Activated CD4-positive, alpha-beta memory T cell treated with anti-CD3 and anti-CD28 coated beads, Interleukin-2, amount 10 ng/mL, durations not matched to agents 7 days and 5 days (primary cell): ENCODE measurements at regions of chr11 and their contacts with region 1.

Region 1: GRCh38 chr11:33742249-33742851 is 6.1 kb upstream of the CD59 start:
- DNase-seq: no peak
- H3K4me3 Mint-ChIP-seq: no peak overlapping the region
- H3K27ac Mint-ChIP-seq: no peak overlapping the region
- H3K4me1 Mint-ChIP-seq: no peaks in the 10 kb centered on the region
- H3K27me3 Mint-ChIP-seq: no peaks in the 10 kb centered on the region

Region 2: GRCh38 chr11:33362051-33362910 is 380.1 kb before region 1 on chr11:
- CTCF ChIA-PET with region 1: interaction called, 25 read pairs
- POLR2A ChIA-PET with region 1: no interaction called
- DNase-seq: no peak
- H3K4me3 Mint-ChIP-seq: no peak overlapping the region
- H3K27ac Mint-ChIP-seq: no peak overlapping the region
- H3K4me1 Mint-ChIP-seq: peaks cover 2% of the 10 kb centered on the region
- H3K27me3 Mint-ChIP-seq: peaks cover 16% of the 10 kb centered on the region

Region 3: DNA sequence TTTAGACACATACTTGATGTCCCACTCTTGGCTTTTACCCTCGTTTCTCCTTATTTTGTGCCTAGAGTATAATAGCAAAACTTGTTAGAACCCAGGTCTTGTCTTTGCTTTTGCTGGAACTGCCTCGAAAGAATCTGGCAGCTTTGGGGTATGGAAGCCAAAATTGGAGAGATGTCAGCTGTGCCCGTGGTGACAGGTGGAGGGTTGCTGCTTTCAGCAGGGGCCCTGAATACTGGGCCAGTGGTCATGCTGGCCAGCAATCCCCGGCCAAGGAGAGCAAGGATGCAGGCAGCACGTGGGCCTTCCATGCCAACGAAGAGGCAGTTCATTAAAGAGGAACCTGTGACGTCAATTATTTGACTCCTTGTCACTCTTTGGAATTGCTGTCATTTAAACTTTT is 304.0 kb before region 1 on chr11:
- CTCF ChIA-PET with region 1: no interaction called
- POLR2A ChIA-PET with region 1: no interaction called
- DNase-seq: no peak
- H3K4me3 Mint-ChIP-seq: no peak overlapping the region
- H3K27ac Mint-ChIP-seq: no peak overlapping the region
- H3K4me1 Mint-ChIP-seq: no peaks in the 10 kb centered on the region
- H3K27me3 Mint-ChIP-seq: peaks cover 5% of the 10 kb centered on the region

Region 4: DNA sequence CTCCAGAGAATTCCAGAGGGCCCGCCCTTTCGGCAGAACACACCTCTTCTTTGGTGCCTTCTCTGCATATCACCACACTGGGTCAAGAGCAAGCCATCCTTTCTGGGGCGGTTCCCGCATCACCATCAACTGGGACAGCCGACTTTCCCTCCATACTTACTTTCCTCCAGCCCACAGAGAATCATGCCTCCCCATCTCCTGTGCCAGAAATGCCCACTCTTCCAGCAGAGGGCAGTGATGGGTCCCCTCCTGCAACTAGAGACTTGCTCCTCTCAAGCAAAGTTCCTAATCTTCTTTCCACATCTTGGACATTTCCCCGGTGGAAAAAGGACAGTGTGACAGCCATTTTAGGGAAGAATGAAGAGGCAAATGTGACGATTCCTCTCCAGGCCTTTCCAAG is 199.4 kb before region 1 on chr11:
- CTCF ChIA-PET with region 1: interaction called, 14 read pairs
- POLR2A ChIA-PET with region 1: no interaction called
- DNase-seq: peak; percentile 39
- H3K4me3 Mint-ChIP-seq: no peak overlapping the region
- H3K27ac Mint-ChIP-seq: no peak overlapping the region
- H3K4me1 Mint-ChIP-seq: peaks cover 30% of the 10 kb centered on the region
- H3K27me3 Mint-ChIP-seq: peaks cover 42% of the 10 kb centered on the region

Region 5: DNA sequence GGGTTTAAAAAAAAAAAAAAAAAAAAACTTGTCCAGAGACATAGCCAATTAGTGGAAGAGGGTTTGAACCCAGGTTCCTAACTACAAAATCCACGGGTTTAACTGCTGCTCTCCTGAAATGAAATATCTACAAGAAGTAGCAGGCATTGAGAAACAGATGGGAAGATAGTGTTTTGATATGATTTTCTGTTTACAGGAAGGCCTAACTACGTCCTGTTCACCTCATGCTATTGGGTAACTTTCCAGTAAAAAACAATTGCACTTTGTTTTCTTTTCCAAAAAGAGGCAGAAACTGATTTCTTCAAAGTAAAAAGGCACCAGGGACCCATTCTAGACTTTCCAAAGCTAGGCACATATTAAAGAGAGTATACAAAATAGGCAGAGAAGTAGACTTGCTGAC is 35.8 kb before region 1 on chr11:
- CTCF ChIA-PET with region 1: interaction called, 17 read pairs
- POLR2A ChIA-PET with region 1: interaction called, 30 read pairs
- DNase-seq: no peak
- H3K4me3 Mint-ChIP-seq: no peak overlapping the region
- H3K27ac Mint-ChIP-seq: no peak overlapping the region
- H3K4me1 Mint-ChIP-seq: peaks cover 10% of the 10 kb centered on the region
- H3K27me3 Mint-ChIP-seq: no peaks in the 10 kb centered on the region

Region 6: GRCh38 chr11:33716236-33716635 is 26.1 kb before region 1 on chr11:
- CTCF ChIA-PET with region 1: interaction called, 69 read pairs
- POLR2A ChIA-PET with region 1: interaction called, 8 read pairs
- DNase-seq: no peak
- H3K4me3 Mint-ChIP-seq: no peak overlapping the region
- H3K27ac Mint-ChIP-seq: no peak overlapping the region
- H3K4me1 Mint-ChIP-seq: peaks cover 14% of the 10 kb centered on the region
- H3K27me3 Mint-ChIP-seq: no peaks in the 10 kb centered on the region

Region 7: GRCh38 chr11:33753304-33753967 is 11.1 kb after region 1 on chr11:
- CTCF ChIA-PET with region 1: interaction called, 21 read pairs
- POLR2A ChIA-PET with region 1: interaction called, 6 read pairs
- DNase-seq: no peak
- H3K4me3 Mint-ChIP-seq: no peak overlapping the region
- H3K27ac Mint-ChIP-seq: no peak overlapping the region
- H3K4me1 Mint-ChIP-seq: peaks cover 8% of the 10 kb centered on the region
- H3K27me3 Mint-ChIP-seq: no peaks in the 10 kb centered on the region

Region 8: GRCh38 chr11:33797879-33798278 is 55.5 kb after region 1 on chr11:
- CTCF ChIA-PET with region 1: no interaction called
- POLR2A ChIA-PET with region 1: no interaction called
- DNase-seq: no peak
- H3K4me3 Mint-ChIP-seq: no peak overlapping the region
- H3K27ac Mint-ChIP-seq: no peak overlapping the region
- H3K4me1 Mint-ChIP-seq: no peaks in the 10 kb centered on the region
- H3K27me3 Mint-ChIP-seq: peaks cover 75% of the 10 kb centered on the region